Activated CD4-positive, alpha-beta T cell treated with anti-CD3 and anti-CD28 coated beads, Interleukin-2, amount 10 ng/mL, durations not matched to agents 24 days and 14 days (primary cell): ENCODE measurements at regions of chr6 and their contacts with region 1.

Region 1: GRCh38 chr6:20366091-20366832 is 35.4 kb upstream of the E2F3 start:
- DNase-seq: peak; percentile 83
- H3K4me3 Mint-ChIP-seq: peak overlapping the region; percentile 73
- H3K27ac Mint-ChIP-seq: peak overlapping the region; percentile 96
- H3K4me1 Mint-ChIP-seq: peaks cover 55% of the 10 kb centered on the region
- H3K27me3 Mint-ChIP-seq: no peaks in the 10 kb centered on the region

Region 2: DNA sequence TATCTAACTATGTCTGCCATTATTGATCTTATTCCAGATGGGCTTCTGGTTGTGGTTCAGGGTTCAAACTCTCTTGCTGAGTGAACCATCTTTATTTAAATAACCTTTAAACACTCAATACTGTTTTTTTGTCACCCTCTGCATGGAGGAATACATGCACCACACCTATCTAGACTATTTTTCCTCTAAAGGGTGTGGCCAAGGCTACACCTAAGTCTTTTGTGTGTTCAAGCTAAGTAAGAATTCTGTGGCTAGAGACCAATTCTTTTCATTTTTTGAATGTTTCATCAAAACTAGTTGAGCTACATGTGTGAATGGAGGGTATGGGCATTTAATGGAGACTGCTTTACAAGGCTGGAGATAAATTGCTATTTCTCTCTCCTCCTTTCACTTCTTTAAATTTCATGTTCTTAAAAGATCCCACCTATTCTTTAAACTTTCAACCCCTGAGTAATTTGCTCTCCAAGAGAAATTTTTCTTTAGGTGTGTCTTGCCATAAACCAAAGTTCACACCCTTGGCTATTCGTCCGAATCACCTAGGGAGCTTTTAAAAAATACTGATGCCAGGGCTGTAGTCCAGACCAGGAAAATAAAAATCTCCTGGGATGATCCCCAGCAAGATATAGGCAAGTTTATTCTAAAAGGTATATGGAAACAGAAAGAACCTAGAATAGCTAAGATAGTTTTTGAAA is 129.2 kb before region 1 on chr6:
- intact Hi-C with region 1: no loop called
- DNase-seq: no peak
- H3K4me3 Mint-ChIP-seq: no peak overlapping the region
- H3K27ac Mint-ChIP-seq: no peak overlapping the region
- H3K4me1 Mint-ChIP-seq: no peaks in the 10 kb centered on the region
- H3K27me3 Mint-ChIP-seq: peaks cover 5% of the 10 kb centered on the region

Region 3: GRCh38 chr6:20319520-20320357 is 46.5 kb before region 1 on chr6:
- intact Hi-C with region 1: loop called (anchors 5 kb)
- DNase-seq: peak; percentile 92
- H3K4me3 Mint-ChIP-seq: peak overlapping the region; percentile 83
- H3K27ac Mint-ChIP-seq: peak overlapping the region; percentile 94
- H3K4me1 Mint-ChIP-seq: peaks cover 12% of the 10 kb centered on the region
- H3K27me3 Mint-ChIP-seq: peaks cover 13% of the 10 kb centered on the region

Region 4: GRCh38 chr6:20334334-20334733 is 31.9 kb before region 1 on chr6:
- intact Hi-C with region 1: loop called (anchors 2 kb)
- DNase-seq: no peak
- H3K4me3 Mint-ChIP-seq: no peak overlapping the region
- H3K27ac Mint-ChIP-seq: no peak overlapping the region
- H3K4me1 Mint-ChIP-seq: peaks cover 29% of the 10 kb centered on the region
- H3K27me3 Mint-ChIP-seq: peaks cover 6% of the 10 kb centered on the region

Region 5: DNA sequence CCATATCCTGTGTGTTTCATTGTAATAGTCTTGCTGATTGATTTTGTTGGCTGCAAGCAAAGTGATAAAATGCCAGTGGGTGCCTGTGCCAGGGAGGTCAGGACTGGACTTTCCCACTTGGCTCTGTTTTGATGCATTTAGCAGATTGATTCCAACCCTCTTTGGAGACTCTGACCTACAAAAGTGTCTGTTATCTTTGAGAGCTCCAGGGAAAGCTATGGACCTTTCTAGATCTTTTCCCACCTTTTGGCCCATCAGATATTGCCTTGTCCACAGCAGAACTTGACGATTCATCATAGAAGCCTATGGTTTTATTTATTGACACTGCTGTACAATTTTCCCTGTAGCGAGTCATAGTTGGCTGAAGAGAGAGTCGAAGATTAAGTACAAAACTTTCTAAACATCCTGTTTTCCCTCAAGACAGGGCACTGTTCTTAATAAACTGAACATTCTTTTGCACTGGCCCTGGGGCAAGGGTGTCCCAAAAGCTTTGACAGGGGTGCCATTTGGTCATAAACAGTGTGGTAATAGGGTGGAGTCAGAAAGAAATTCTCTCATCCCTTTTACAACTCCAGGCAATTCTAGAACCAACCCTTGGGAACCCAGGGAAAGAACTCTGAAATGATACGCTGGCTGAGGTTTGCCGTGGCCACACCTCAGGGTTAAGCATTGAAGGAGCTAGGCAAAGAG is 89.1 kb after region 1 on chr6:
- intact Hi-C with region 1: no loop called
- DNase-seq: no peak
- H3K4me3 Mint-ChIP-seq: no peak overlapping the region
- H3K27ac Mint-ChIP-seq: peak overlapping the region; percentile 62
- H3K4me1 Mint-ChIP-seq: peaks cover 31% of the 10 kb centered on the region
- H3K27me3 Mint-ChIP-seq: no peaks in the 10 kb centered on the region

Region 6: GRCh38 chr6:20661721-20662120 is 295.5 kb after region 1 on chr6:
- intact Hi-C with region 1: no loop called
- DNase-seq: no peak
- H3K4me3 Mint-ChIP-seq: no peak overlapping the region
- H3K27ac Mint-ChIP-seq: no peak overlapping the region
- H3K4me1 Mint-ChIP-seq: no peaks in the 10 kb centered on the region
- H3K27me3 Mint-ChIP-seq: no peaks in the 10 kb centered on the region